Head of caudate nucleus (tissue), 42 donors: ENCODE measurements at regions of chr19 and their contacts with region 1.

Region 1: DNA sequence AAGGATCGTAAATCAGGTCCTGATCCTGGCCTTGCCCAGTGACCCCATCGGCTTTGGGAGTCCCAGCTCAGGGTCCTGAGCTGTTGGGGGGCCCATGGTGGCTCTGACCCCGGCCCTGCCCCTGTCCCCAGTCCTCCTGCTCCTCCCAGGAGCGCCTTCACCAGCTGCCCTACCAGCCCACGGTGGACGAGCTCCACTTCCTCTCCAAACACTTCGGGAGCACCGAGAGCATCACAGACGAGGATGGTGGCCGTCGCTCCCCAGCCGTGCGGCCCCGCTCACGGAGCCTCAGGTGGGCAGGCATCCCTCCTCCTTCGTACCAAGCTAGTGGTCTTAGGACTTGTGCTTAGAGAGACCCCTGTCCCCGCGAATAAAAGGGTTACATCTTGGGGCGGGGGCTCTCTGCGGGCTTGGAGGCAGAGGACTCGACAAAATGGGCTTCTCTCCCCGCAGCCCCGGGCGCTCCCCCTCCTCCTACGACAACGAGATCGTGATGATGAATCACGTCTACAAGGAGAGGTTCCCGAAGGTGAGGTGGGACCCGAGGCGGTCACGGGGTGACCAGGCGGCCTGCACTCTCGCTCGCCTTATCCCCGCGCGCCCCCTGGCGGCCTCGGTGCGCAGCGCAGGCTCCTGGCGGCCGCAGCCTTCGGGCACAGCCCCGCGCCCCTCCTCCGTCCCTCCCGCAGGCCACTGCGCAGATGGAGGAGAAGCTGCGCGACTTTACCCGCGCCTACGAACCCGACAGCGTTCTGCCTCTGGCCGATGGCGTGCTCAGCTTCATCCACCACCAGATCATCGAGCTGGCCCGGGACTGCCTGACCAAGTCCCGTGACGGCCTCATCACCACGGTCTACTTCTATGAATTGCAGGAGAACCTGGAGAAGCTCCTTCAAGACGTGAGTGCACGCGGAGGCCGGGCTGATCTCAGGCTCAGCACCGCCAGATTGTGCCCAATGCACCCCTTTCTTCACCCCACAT is 9.1 kb downstream of the MAST1 start:
- DNase-seq: peak; percentile 59 to 95 (median 87)

Region 2: GRCh38 chr19:12425888-12426274 is 421.6 kb before region 1 on chr19:
- intact Hi-C with region 1: no loop called
- DNase-seq: no peak

Region 3: DNA sequence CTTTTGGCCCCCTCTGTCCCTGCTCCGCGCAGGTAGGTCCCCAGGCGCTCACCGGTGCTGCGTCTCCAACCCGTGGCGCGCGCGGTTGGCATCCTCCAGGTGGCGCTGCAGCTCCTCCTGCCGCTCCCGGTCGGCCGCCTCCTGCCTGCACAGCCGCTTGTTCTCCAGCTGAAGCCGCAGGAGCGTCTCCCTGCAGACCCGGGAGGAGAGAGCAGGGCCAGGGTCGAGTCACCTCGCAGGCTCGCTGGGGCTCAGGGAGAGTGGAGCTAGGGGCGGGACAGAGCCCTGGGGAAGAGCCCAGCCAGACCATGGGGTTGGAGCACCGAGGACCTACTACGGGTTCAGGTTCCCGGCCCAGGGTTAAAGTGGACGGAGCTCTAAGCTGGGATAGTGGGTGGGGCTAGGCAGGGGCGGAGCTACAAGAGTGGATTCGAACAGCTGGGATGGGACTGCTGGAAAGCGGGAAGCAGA is 81.4 kb before region 1 on chr19:
- intact Hi-C with region 1: loop called (anchors 5 kb)
- DNase-seq: peak in 35 of 42 donors; percentile 65 to 93 (median 85)